ENCODE measurements at regions of chr5 and their contacts with region 1.

Region 1: GRCh38 chr5:96548947-96549346 is 113.2 kb upstream of the CAST start:
- DNase-seq: no peak
- H3K4me3 ChIP-seq: no peak overlapping the region
- H3K27ac ChIP-seq: no peak overlapping the region
- H3K4me1 ChIP-seq: no peaks in the 10 kb centered on the region
- H3K27me3 ChIP-seq: no peaks in the 10 kb centered on the region
- CTCF ChIP-seq: no peak
- POLR2A ChIP-seq: no peak

Region 2: GRCh38 chr5:96157841-96158291 is 391.1 kb before region 1 on chr5:
- intact Hi-C with region 1: loop called (anchors 5 kb)
- DNase-seq: no peak
- H3K4me3 ChIP-seq: no peak overlapping the region
- H3K27ac ChIP-seq: peak overlapping the region; percentile 1 to 59
- H3K4me1 ChIP-seq: no peaks in the 10 kb centered on the region
- H3K27me3 ChIP-seq: no peaks in the 10 kb centered on the region
- CTCF ChIP-seq: no peak
- POLR2A ChIP-seq: no peak

Region 3: GRCh38 chr5:96823900-96824351 is 275.0 kb after region 1 on chr5:
- intact Hi-C with region 1: no loop called
- DNase-seq: peak in 1 of 2 donors; percentile 32
- H3K4me3 ChIP-seq: no peak overlapping the region
- H3K27ac ChIP-seq: peak overlapping the region; percentile 44 to 70
- H3K4me1 ChIP-seq: no peaks in the 10 kb centered on the region
- H3K27me3 ChIP-seq: no peaks in the 10 kb centered on the region
- CTCF ChIP-seq: no peak
- POLR2A ChIP-seq: no peak

Measured in breast epithelium (tissue), 4 donors.